Common myeloid progenitor, CD34-positive (primary cell): ENCODE measurements at regions of chr20 and their contacts with region 1.

Region 1: GRCh38 chr20:51541189-51542032 is 1.1 kb downstream of the NFATC2 start:
- DNase-seq: peak; percentile 98 to 100 (median 99)
- H3K4me3 ChIP-seq: peak overlapping the region; percentile 62 to 86 (median 74)
- H3K27ac ChIP-seq: peak overlapping the region; percentile 97 to 98
- H3K4me1 ChIP-seq: peaks cover 13 to 58% (median 53%) of the 10 kb centered on the region in 4 experiments
- H3K27me3 ChIP-seq: no peaks in the 10 kb centered on the region

Region 2: DNA sequence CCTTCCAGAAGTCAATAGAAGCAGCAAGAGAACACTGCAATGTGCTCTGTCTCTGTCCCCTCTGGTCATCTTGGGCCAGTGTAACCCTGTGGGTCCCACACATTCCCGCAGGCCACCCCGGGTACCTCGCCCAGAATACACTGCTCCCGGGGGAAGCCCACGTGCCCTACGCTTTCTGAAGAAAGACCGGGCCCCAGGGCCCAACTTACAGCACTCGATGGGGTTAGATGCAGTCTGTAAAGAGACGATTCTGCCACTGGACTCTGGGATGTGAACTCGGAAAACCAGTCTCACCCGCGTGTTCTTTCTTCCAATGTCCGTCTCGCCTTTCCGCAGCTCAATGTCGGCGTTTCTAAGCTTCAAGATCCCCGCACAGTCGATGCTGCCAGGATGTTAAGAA is 67.6 kb before region 1 on chr20:
- CTCF ChIA-PET with region 1: no interaction called
- POLR2A ChIA-PET with region 1: no interaction called
- DNase-seq: no peak
- H3K4me3 ChIP-seq: no peak overlapping the region
- H3K27ac ChIP-seq: no peak overlapping the region
- H3K4me1 ChIP-seq: no peaks in the 10 kb centered on the region
- H3K27me3 ChIP-seq: no peaks in the 10 kb centered on the region

Region 3: GRCh38 chr20:51492167-51493092 is 49.0 kb before region 1 on chr20:
- CTCF ChIA-PET with region 1: interaction called, 15 read pairs
- POLR2A ChIA-PET with region 1: interaction called, 23 read pairs
- DNase-seq: peak; percentile 77 to 88 (median 82)
- H3K4me3 ChIP-seq: peak overlapping the region in 5 of 7 experiments; percentile 27 to 58 (median 52)
- H3K27ac ChIP-seq: peak overlapping the region; percentile 52 to 76
- H3K4me1 ChIP-seq: peaks cover 5 to 80% (median 75%) of the 10 kb centered on the region in 4 experiments
- H3K27me3 ChIP-seq: no peaks in the 10 kb centered on the region

Region 4: DNA sequence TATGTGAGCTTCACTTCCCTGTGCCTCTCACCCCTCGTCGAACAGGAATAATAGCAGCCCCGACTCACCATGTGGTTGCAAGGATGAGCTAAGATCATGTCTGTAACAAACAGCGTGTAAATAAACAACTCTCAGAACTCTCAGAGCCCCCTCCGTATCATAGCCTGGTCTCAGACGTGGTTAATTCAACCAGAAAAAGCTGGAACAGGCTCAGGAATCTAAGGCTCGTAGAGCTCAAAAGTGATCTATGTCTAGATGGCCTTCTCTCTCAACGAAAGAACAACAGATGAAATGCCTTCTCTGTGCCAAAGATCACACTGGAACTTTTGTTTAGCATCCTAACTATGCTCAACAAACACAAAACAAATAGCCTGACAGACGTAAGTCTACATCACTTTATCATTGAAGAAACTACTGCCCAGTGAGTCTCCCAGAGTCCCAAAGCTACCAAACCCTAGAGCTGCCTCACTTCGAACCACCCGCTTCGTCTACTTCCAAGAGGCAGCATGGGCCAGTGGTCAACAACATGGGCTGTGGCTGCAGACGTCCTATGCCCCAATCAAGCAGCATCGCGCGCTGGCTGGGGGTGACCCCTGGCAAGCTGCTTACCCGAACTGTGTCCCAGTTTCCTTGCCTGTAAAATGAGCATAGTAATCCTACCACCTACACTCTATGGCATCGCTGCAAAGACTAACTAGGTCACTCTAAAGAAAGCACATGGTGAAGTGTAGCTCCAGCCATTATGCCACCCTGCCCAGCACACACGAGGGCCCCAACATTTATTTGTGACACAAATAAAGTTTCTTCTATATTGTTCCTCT is 34.0 kb before region 1 on chr20:
- CTCF ChIA-PET with region 1: interaction called, 13 read pairs
- POLR2A ChIA-PET with region 1: interaction called, 9 read pairs
- DNase-seq: no peak
- H3K4me3 ChIP-seq: no peak overlapping the region
- H3K27ac ChIP-seq: no peak overlapping the region
- H3K4me1 ChIP-seq: peaks cover 0 to 9% (median 3%) of the 10 kb centered on the region in 4 experiments
- H3K27me3 ChIP-seq: no peaks in the 10 kb centered on the region

Region 5: GRCh38 chr20:51525241-51526129 is 15.9 kb before region 1 on chr20:
- CTCF ChIA-PET with region 1: interaction called, 5 read pairs
- POLR2A ChIA-PET with region 1: interaction called, 15 read pairs
- DNase-seq: peak; percentile 76 to 93 (median 92)
- H3K4me3 ChIP-seq: peak overlapping the region in 4 of 7 experiments; percentile 0 to 69 (median 30)
- H3K27ac ChIP-seq: peak overlapping the region; percentile 25 to 69
- H3K4me1 ChIP-seq: peaks cover 0 to 60% (median 59%) of the 10 kb centered on the region in 4 experiments
- H3K27me3 ChIP-seq: no peaks in the 10 kb centered on the region

Region 6: GRCh38 chr20:51562332-51563155 is 21.1 kb after region 1 on chr20:
- CTCF ChIA-PET with region 1: interaction called, 11 read pairs
- POLR2A ChIA-PET with region 1: interaction called, 7 read pairs
- DNase-seq: peak in 2 of 3 donors; percentile 24 to 53
- H3K4me3 ChIP-seq: peak overlapping the region in 6 of 7 experiments; percentile 51 to 78 (median 68)
- H3K27ac ChIP-seq: no peak overlapping the region
- H3K4me1 ChIP-seq: peaks cover 0 to 33% (median 25%) of the 10 kb centered on the region in 4 experiments
- H3K27me3 ChIP-seq: peaks cover 8 to 58% (median 34%) of the 10 kb centered on the region in 5 experiments